ENCODE measurements at regions of chr2 and their contacts with region 1.

Region 1: DNA sequence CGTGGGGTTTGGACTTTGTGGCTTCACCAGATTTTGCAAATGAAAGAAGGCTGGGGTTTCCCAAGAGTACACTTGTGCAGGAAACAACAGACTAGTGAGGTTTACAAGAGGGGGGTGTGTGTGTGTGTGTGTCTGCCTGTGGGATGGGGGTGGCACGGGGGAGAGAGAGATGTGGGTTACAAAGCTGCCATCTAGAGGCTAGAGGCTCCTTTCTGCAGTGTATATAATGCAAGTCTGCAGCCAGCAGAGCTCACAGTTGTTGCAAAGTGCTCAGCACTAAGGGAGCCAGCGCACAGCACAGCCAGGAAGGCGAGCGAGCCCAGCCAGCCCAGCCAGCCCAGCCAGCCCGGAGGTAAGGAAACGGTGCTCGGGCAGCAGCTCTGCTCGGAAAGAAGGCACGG is at the start of gene ACKR3:
- DNase-seq: peak; percentile 65
- ATAC-seq: peak; percentile 96
- H3K4me3 Mint-ChIP-seq: peak within 1 kb of the TSS; percentile 82
- H3K27ac Mint-ChIP-seq: no peak within 1 kb of the TSS
- H3K4me1 Mint-ChIP-seq: peaks cover 24% of the 10 kb centered on the region
- H3K27me3 Mint-ChIP-seq: no peaks in the 10 kb centered on the region
- total RNA-seq, gene ACKR3: 4.4 to 4.5 TPM

Region 2: DNA sequence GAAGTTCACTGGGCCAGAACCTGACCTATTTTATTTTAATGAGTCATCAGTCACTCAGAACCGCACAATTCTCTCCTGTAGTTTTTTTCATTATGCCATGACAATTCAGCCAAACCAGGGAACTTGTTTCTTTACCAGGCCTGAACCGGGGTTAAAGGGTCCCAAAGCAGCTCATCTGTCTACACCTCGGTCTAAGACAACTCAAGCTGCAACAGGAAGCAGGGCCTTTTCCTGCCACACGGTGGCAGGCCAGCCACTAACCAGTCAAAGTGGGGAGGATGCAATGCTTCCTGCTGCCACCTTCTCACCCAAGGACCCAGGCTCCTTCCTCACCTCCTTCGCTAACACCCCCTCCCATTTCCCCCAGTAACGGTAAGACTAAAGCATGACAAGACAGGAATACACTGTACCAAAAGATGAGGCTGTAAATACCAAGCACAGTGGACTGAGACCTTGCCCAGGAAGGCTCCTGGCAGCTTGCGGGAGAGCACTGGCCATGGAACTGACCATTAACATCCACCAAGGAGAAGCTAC is 56.6 kb before region 1 on chr2:
- POLR2A ChIA-PET with region 1: interaction called, 34 read pairs
- DNase-seq: peak; percentile 75
- ATAC-seq: peak; percentile 96
- H3K4me3 Mint-ChIP-seq: no peak overlapping the region
- H3K27ac Mint-ChIP-seq: no peak overlapping the region
- H3K4me1 Mint-ChIP-seq: peaks cover 4% of the 10 kb centered on the region
- H3K27me3 Mint-ChIP-seq: peaks cover 19% of the 10 kb centered on the region

Measured in activated naive CD8-positive, alpha-beta T cell treated with anti-CD3 and anti-CD28 coated beads, Interleukin-2, amount 10 ng/mL, durations not matched to agents 7 days and 5 days (primary cell).